Sigmoid colon (tissue), 7 donors: ENCODE measurements at regions of chr2 and their contacts with region 1.

Region 1: DNA sequence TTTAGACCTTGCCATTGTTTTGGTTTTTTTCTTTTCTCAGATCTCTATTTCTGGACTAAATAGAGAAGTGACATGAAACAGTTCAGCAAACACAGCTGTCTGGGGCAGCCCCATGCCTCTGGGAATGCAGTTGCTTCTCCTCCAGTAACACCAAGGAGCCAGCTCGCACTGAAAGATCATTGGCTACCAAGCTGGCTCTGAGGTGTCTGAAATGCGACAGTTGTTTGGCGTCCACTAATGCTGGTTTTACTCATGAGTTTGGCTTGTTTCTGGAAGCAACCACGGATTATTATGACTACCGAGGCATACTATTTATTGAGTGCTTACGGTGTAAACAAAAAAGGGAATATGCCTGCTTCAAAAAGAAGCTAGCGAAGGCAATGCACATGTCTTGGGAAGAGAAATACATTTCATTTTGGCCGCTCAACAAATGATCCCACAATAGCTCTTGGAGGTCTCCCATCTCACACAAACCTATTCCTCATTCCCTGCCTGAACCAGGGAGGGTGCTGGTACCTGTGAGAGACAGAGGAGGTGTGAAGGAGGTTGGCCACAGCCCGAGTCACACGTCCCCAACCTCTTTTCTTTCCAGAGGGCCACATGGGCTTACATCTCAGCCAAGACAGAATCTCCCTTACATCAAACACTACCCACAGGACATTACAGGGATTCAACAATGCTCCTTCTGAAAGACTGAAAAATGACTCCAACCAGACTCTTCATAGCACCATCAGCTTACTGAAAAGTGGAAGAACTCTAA is 37.5 kb upstream of the NEB start:
- DNase-seq: peak; percentile 73
- H3K4me3 ChIP-seq: no peak overlapping the region
- H3K27ac ChIP-seq: peak overlapping the region; percentile 6 to 70 (median 48)
- H3K4me1 ChIP-seq: peaks cover 0 to 41% (median 28%) of the 10 kb centered on the region in 4 donors
- H3K27me3 ChIP-seq: no peaks in the 10 kb centered on the region
- CTCF ChIP-seq: no peak
- EP300 ChIP-seq: peak in 2 of 4 donors; percentile 38 to 42
- POLR2A ChIP-seq: no peak

Region 2: DNA sequence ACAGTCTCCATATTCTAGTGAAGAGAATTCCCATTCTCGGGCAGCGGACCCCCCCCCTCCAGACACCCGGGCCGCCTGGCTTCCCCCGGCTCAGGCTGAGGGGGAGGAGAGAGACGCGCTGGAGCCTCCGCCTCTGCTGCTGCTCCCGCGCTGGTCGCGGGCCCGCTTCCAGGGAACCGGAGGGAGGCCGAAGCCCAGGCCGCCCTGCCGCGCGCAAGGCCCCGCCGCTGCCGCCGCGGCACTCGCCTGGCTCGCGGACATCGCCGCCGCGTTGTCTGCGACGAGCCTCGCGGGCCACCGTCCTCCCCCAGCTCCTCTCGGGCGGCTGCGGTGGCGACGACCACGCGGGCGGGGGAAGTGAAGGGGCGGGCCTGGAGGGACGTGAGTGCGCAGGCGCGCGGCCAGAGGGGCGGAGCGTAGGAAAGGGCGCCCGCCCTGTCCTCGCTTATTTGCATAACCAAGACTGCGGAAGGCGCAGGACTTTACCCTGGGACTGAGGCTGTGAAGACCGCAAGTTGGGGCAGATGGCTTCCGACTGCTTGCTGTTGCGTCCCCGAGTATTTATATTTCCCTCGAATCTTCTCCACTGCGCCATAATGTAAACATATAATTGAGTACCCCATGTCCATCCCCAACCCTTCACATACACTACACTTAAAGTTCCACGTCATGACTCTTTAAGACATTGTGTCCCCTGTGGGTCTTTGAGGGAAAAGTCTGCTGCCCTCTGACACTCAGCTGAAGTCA is 56.5 kb after region 1 on chr2 and contains the start of gene ARL5A:
- intact Hi-C with region 1: loop called (anchors 5 kb)
- DNase-seq: peak; percentile 98
- H3K4me3 ChIP-seq: peak within 1 kb of the TSS; percentile 82 to 98 (median 92)
- H3K27ac ChIP-seq: peak within 1 kb of the TSS; percentile 88 to 90 (median 88)
- H3K4me1 ChIP-seq: peaks cover 0 to 40% (median 28%) of the 10 kb centered on the region in 4 donors
- H3K27me3 ChIP-seq: no peaks in the 10 kb centered on the region
- CTCF ChIP-seq: no peak
- EP300 ChIP-seq: no peak
- POLR2A ChIP-seq: peak; percentile 53 to 63
- total RNA-seq, gene ARL5A: 41.3 to 46.4 (median 43.9) TPM